Activated CD4-positive, alpha-beta T cell treated with anti-CD3 and anti-CD28 coated beads for 36 hours (primary cell): ENCODE measurements at regions of chr3 and their contacts with region 1.

Region 1: GRCh38 chr3:69306239-69307185 is 79.4 kb downstream of the FRMD4B start:
- DNase-seq: peak; percentile 83
- ATAC-seq: peak; percentile 89
- H3K4me3 Mint-ChIP-seq: no peak overlapping the region
- H3K27ac Mint-ChIP-seq: no peak overlapping the region
- H3K4me1 Mint-ChIP-seq: peaks cover 21% of the 10 kb centered on the region
- H3K27me3 Mint-ChIP-seq: no peaks in the 10 kb centered on the region

Region 2: DNA sequence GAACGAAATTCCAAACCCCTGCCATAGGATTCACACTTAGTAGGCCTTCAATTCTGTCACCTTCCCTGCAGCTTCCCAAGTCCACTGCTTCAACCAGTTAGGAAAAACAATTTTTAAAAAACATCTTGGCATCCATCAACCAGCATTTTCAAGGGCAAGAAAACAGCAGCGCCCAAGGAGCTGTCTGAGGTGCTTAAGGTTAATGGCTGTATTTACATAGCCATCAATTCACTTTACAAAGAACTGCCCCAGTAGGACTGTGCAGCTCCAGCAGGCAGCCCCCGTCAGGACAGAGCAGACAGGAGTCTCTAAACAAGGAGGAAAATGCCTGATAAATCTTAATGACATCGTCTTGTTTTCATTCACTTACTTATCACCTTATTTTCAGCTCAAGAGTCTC is 387.5 kb before region 1 on chr3:
- CTCF ChIA-PET with region 1: no interaction called
- POLR2A ChIA-PET with region 1: no interaction called
- intact Hi-C with region 1: no loop called
- DNase-seq: no peak
- ATAC-seq: no peak
- H3K4me3 Mint-ChIP-seq: no peak overlapping the region
- H3K27ac Mint-ChIP-seq: no peak overlapping the region
- H3K4me1 Mint-ChIP-seq: no peaks in the 10 kb centered on the region
- H3K27me3 Mint-ChIP-seq: peaks cover 34% of the 10 kb centered on the region

Region 3: GRCh38 chr3:69013253-69014021 is 293.1 kb before region 1 on chr3 and contains the start of gene EOGT:
- CTCF ChIA-PET with region 1: interaction called, 3 read pairs
- POLR2A ChIA-PET with region 1: no interaction called
- intact Hi-C with region 1: loop called in 1 of 2 experiments (anchors 5 kb)
- DNase-seq: peak; percentile 88
- ATAC-seq: peak; percentile 85
- H3K4me3 Mint-ChIP-seq: peak within 1 kb of the TSS; percentile 77
- H3K27ac Mint-ChIP-seq: peak within 1 kb of the TSS; percentile 82
- H3K4me1 Mint-ChIP-seq: peaks cover 24% of the 10 kb centered on the region
- H3K27me3 Mint-ChIP-seq: no peaks in the 10 kb centered on the region
- total RNA-seq, gene EOGT: 6.0 to 8.4 TPM

Region 4: GRCh38 chr3:69181592-69182211 is 124.8 kb before region 1 on chr3:
- CTCF ChIA-PET with region 1: interaction called, 14 read pairs
- POLR2A ChIA-PET with region 1: no interaction called
- intact Hi-C with region 1: no loop called
- DNase-seq: no peak
- ATAC-seq: no peak
- H3K4me3 Mint-ChIP-seq: no peak overlapping the region
- H3K27ac Mint-ChIP-seq: no peak overlapping the region
- H3K4me1 Mint-ChIP-seq: peaks cover 17% of the 10 kb centered on the region
- H3K27me3 Mint-ChIP-seq: no peaks in the 10 kb centered on the region

Region 5: DNA sequence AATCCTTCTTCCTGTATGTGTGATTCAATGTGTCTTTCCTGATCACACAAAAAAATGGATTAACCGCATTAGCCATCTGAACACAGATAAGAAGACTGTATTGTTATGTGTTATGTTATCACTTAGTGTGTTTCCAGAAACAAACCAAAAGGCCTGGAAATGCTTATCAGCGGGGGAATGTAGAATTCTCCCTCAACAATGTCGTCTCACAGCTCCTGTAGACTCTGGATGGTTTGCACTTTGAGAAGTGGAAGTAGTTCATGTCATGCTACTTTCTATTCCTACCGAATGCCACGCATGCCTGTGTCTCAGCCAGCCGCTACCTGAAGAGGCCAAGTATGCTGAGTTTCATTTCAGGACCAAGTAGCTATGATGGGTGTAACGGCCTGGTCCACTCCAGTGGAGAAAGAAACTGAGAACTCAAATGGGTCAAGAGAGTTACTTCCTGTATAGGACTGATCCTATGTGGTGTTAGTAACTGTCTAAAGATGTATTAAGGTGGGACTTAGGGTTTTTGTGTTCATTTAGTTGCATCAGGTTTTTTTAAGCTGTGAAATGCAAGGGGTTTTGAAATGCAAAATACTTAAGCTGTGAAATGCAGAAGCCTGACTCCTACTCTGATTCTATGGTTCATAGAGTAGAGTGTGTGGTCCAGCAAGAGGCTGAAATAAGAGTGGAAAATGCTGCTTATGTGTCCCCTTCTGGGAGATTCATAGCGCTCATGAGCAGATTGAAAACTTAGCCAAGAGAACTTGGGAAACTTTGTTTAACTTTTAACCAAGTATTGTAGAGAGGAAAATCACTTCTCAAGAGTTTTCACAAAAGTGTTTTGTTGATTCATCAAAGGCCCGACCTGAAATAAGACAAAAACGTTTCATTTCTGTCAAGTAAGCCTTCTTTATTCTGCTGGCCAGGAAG is 65.6 kb before region 1 on chr3:
- CTCF ChIA-PET with region 1: interaction called, 10 read pairs
- POLR2A ChIA-PET with region 1: no interaction called
- intact Hi-C with region 1: no loop called
- DNase-seq: no peak
- ATAC-seq: no peak
- H3K4me3 Mint-ChIP-seq: no peak overlapping the region
- H3K27ac Mint-ChIP-seq: no peak overlapping the region
- H3K4me1 Mint-ChIP-seq: peaks cover 24% of the 10 kb centered on the region
- H3K27me3 Mint-ChIP-seq: no peaks in the 10 kb centered on the region

Region 6: DNA sequence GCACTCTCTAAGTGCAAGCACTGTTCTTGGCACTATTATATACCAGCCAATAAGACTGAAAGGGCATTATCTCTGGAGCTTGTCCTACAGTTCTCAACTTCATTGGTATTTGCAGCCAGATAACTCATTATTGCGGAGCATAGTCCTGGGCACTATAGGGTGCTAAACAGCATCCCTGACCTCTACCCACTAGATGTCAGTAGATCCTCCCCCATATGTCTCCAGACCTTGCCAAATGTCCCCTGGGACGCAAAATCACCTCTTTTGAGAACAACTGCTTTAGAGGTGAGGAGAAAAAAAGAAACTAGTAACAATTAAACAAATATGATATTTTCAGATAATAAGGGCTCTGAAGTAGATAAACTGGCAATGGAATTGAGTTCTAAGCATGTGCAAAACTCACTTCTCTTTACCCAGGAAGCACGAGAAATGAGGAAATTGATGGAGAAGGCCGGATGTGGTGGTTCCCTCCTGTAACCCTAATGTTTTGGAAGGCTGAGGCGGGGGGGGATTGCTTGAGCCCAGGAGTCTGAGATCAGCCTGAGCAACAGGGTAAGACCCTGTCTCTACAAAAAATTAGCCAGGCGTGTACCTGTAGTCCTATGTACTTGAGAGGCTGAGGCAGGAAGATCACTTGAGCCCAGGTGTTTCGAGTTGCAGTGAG is 18.0 kb after region 1 on chr3:
- CTCF ChIA-PET with region 1: interaction called, 19 read pairs
- POLR2A ChIA-PET with region 1: no interaction called
- intact Hi-C with region 1: no loop called
- DNase-seq: peak; percentile 15
- ATAC-seq: peak; percentile 34
- H3K4me3 Mint-ChIP-seq: no peak overlapping the region
- H3K27ac Mint-ChIP-seq: peak overlapping the region; percentile 43
- H3K4me1 Mint-ChIP-seq: peaks cover 45% of the 10 kb centered on the region
- H3K27me3 Mint-ChIP-seq: no peaks in the 10 kb centered on the region

Region 7: DNA sequence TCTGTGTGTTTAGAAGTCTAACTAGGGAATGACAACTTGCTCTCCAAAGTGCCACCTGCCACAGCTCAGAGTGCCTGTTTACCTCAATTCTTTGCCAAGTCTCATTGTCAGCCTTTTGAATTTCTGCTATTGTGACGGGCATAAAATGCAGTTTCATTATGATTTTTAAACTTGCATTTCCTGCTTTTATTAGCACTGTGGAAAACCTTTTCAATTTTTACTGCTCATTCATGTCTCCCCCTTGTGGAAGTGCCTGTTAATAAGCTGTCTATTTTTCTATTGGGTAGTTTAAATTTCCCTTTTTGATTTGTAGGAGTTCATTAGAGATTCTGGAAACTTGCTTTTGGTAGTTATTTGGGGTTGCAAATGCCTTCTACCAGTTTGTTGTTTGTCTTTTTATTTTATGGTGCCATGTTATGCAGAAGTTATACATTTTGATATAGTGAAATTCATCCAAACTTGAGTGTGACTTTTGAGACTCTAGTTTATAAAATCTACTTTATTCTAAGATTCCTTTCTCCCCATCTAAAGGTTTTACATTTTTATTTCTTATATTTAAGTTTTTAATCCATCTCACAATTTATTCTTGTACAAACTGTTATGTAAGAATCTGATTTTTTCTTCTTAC is 133.2 kb after region 1 on chr3:
- CTCF ChIA-PET with region 1: no interaction called
- POLR2A ChIA-PET with region 1: no interaction called
- intact Hi-C with region 1: loop called in 1 of 2 experiments (anchors 5 kb)
- DNase-seq: no peak
- ATAC-seq: no peak
- H3K4me3 Mint-ChIP-seq: no peak overlapping the region
- H3K27ac Mint-ChIP-seq: no peak overlapping the region
- H3K4me1 Mint-ChIP-seq: peaks cover 34% of the 10 kb centered on the region
- H3K27me3 Mint-ChIP-seq: no peaks in the 10 kb centered on the region